ENCODE measurements at regions of chr6 and their contacts with region 1.

Region 1: GRCh38 chr6:157823528-157824370 is 703 bp downstream of the SNX9 start:
- DNase-seq: peak; percentile 85
- H3K4me3 ChIP-seq: peak overlapping the region; percentile 78 to 95 (median 81)
- H3K27ac ChIP-seq: peak overlapping the region; percentile 93
- H3K4me1 ChIP-seq: peaks cover 12% of the 10 kb centered on the region
- H3K27me3 ChIP-seq: no peaks in the 10 kb centered on the region
- CTCF ChIP-seq: no peak

Region 2: GRCh38 chr6:157764178-157765033 is 59.3 kb before region 1 on chr6:
- CTCF ChIA-PET with region 1: interaction called, 4 read pairs
- dilution Hi-C with region 1: no loop called
- in situ Hi-C with region 1: no loop called
- intact Hi-C with region 1: loop called (anchors 1 kb)
- DNase-seq: peak; percentile 100
- H3K4me3 ChIP-seq: no peak overlapping the region
- H3K27ac ChIP-seq: peak overlapping the region; percentile 98
- H3K4me1 ChIP-seq: peaks cover 53% of the 10 kb centered on the region
- H3K27me3 ChIP-seq: no peaks in the 10 kb centered on the region
- CTCF ChIP-seq: no peak

Region 3: DNA sequence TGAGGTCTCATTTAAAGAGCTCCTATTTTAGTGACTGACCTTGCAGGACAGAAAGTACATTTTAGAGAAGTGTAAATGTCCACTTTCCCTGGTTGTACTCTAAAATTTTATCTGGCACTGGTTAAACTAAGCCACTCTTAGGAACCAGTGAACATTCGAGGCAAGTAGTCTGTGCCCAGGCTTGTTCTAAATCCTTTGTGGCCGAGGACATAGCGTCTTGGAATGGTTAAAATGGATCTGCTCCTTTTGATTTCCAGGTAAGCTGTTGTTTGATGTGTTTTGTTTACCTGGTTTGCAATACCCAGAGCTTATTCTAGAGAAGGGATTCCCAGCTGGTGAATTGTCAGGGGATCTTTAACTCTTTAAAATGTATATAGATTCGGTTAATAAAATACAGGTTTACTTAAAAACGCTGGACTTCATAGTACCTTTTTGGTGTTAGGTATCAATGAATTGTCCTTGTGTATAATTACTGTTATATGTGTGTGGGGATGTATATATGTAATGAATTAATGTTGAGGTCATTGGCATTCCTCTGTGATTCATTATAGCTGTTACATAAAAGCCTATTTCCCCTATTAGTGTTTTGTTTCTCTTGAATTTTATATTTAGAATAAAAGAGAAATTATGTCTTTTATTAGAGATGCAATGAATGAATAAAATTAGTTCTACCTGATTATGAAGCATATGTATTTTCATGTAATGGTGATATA is 15.1 kb after region 1 on chr6:
- CTCF ChIA-PET with region 1: no interaction called
- dilution Hi-C with region 1: no loop called
- in situ Hi-C with region 1: no loop called
- intact Hi-C with region 1: loop called (anchors 2 kb)
- DNase-seq: peak; percentile 65
- H3K4me3 ChIP-seq: peak overlapping the region; percentile 39 to 56 (median 40)
- H3K27ac ChIP-seq: peak overlapping the region; percentile 93
- H3K4me1 ChIP-seq: peaks cover 66% of the 10 kb centered on the region
- H3K27me3 ChIP-seq: no peaks in the 10 kb centered on the region
- CTCF ChIP-seq: no peak

Region 4: GRCh38 chr6:157873735-157874344 is 50.1 kb after region 1 on chr6:
- CTCF ChIA-PET with region 1: no interaction called
- dilution Hi-C with region 1: no loop called
- in situ Hi-C with region 1: no loop called
- intact Hi-C with region 1: loop called (anchors 1 kb)
- DNase-seq: peak; percentile 56
- H3K4me3 ChIP-seq: no peak overlapping the region
- H3K27ac ChIP-seq: no peak overlapping the region
- H3K4me1 ChIP-seq: no peaks in the 10 kb centered on the region
- H3K27me3 ChIP-seq: no peaks in the 10 kb centered on the region
- CTCF ChIP-seq: peak; percentile 82 to 96

Measured in mammary epithelial cell (primary cell).